Panc1 (cell line): ENCODE measurements at regions of chr7 and their contacts with region 1.

Region 1: DNA sequence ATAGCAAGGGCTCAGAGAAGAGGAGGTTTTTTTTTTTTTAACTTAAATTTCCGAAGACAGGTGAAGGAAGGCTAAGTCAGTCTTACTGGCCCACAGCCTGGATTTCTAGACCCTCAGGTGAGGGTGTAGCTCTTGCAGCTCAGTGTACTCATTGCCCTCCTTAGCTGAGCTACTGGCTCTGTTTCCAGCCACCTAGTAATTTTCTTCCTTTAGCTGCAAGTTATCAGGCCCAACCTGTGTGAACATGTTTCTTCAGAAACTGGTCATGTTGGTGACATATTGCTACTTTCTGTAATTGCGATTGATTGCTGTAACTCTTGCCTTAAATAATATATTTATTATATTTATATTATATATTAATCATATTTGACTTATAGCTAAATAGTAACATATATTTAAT is 9.9 kb upstream of the TMEM229A start:
- DNase-seq: no peak
- ATAC-seq: no peak
- H3K4me3 ChIP-seq: no peak overlapping the region
- H3K27ac ChIP-seq: no peak overlapping the region
- H3K4me1 ChIP-seq: no peaks in the 10 kb centered on the region
- H3K27me3 ChIP-seq: no peaks in the 10 kb centered on the region
- CTCF ChIP-seq: no peak

Region 2: GRCh38 chr7:124779194-124779593 is 736.4 kb after region 1 on chr7:
- CTCF ChIA-PET with region 1: interaction called, 17 read pairs
- POLR2A ChIA-PET with region 1: no interaction called
- in situ Hi-C with region 1: no loop called
- intact Hi-C with region 1: no loop called
- DNase-seq: no peak
- ATAC-seq: no peak
- H3K4me3 ChIP-seq: no peak overlapping the region
- H3K27ac ChIP-seq: no peak overlapping the region
- H3K4me1 ChIP-seq: no peaks in the 10 kb centered on the region
- H3K27me3 ChIP-seq: no peaks in the 10 kb centered on the region
- CTCF ChIP-seq: no peak

Region 3: GRCh38 chr7:125074141-125074540 is 1031.3 kb after region 1 on chr7:
- CTCF ChIA-PET with region 1: no interaction called
- POLR2A ChIA-PET with region 1: no interaction called
- in situ Hi-C with region 1: no loop called
- intact Hi-C with region 1: no loop called
- DNase-seq: no peak
- ATAC-seq: no peak
- H3K4me3 ChIP-seq: no peak overlapping the region
- H3K27ac ChIP-seq: no peak overlapping the region
- H3K4me1 ChIP-seq: no peaks in the 10 kb centered on the region
- H3K27me3 ChIP-seq: no peaks in the 10 kb centered on the region
- CTCF ChIP-seq: no peak